ENCODE measurements at regions of chr1 and their contacts with region 1.

Region 1: DNA sequence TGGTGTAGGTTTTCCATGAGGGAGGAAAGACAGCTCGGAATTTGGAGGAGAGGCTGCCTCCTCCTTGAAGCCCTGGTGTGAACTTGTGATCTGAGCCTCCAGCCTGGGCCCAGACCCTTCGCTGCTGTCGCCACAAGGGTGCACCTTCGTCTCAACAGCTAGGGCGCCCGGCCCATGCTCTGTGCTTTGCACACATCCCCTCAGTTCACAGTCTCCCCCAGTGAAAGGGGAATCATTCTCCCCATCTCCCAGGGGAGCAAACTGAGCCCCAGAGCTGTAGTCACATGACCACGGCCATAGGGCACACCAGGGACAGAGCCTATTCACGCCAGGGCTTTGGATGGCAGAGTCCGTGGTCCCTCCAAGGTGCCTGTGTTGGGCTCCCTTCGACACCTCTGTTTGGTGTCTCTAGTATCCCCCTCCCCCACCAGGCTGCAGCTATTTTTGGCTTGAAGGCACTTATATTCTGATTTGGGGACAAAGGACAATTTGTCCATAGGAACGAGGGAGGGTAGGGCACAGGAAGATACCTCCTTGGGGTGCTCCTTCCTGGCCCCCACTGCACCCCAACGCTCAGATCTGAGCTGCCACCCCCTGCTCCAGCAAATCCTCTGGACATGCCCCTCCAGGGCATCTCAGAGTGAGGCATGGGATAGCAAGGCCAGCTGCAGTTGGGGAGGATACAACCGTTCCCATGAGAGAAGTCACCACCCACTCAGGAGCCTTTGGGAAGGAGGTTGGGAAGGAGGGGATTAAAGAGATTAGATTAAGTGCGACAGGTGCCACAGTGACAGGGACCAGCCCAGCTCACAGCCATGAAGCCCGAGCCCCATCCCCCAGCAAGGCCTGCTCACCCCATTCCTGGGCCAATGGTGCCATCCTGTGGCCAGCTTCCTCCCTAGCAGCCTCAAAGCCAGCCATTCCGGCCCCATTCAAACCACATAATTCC is 15.7 kb downstream of the MATN1 start:
- DNase-seq: peak; percentile 49
- H3K4me3 ChIP-seq: no peak overlapping the region
- H3K27ac ChIP-seq: no peak overlapping the region
- H3K4me1 ChIP-seq: peaks cover 11% of the 10 kb centered on the region
- H3K27me3 ChIP-seq: no peaks in the 10 kb centered on the region
- CTCF ChIP-seq: peak; percentile 93 to 98

Region 2: GRCh38 chr1:28886731-28887418 is 1820.8 kb before region 1 on chr1:
- CTCF ChIA-PET with region 1: no interaction called
- dilution Hi-C with region 1: no loop called
- in situ Hi-C with region 1: no loop called
- intact Hi-C with region 1: loop called (anchors 2 kb)
- DNase-seq: peak; percentile 86
- H3K4me3 ChIP-seq: peak overlapping the region; percentile 69 to 95 (median 78)
- H3K27ac ChIP-seq: peak overlapping the region; percentile 66
- H3K4me1 ChIP-seq: peaks cover 25% of the 10 kb centered on the region
- H3K27me3 ChIP-seq: no peaks in the 10 kb centered on the region
- CTCF ChIP-seq: no peak

Region 3: GRCh38 chr1:29698033-29698432 is 1009.7 kb before region 1 on chr1:
- CTCF ChIA-PET with region 1: no interaction called
- dilution Hi-C with region 1: no loop called
- in situ Hi-C with region 1: loop called in 1 of 2 experiments (anchors 25 kb)
- intact Hi-C with region 1: loop called (anchors 1 kb)
- DNase-seq: peak; percentile 51
- H3K4me3 ChIP-seq: no peak overlapping the region
- H3K27ac ChIP-seq: no peak overlapping the region
- H3K4me1 ChIP-seq: no peaks in the 10 kb centered on the region
- H3K27me3 ChIP-seq: no peaks in the 10 kb centered on the region
- CTCF ChIP-seq: peak; percentile 63 to 67

Region 4: DNA sequence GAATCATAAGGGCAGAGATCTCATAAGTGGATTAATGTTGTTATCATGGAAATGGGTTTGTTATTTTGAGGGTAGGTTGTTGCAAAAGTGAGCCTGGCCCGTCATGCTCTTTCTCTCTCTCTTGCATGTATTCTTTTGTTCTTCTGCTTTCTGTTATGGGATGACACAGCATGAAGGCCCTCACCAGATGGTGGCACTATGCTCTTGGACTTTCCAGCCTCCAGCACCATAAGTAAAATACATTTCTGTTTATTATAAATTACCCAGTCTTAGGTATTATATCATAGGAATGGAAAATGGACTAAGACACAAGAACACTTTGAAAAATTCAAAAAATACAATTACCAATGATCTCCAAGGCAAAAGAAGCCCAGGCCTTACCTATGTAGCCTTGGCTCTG is 795.3 kb before region 1 on chr1:
- CTCF ChIA-PET with region 1: interaction called, 3 read pairs
- dilution Hi-C with region 1: no loop called
- in situ Hi-C with region 1: no loop called
- intact Hi-C with region 1: loop called (anchors 1 kb)
- DNase-seq: peak; percentile 30
- H3K4me3 ChIP-seq: no peak overlapping the region
- H3K27ac ChIP-seq: no peak overlapping the region
- H3K4me1 ChIP-seq: no peaks in the 10 kb centered on the region
- H3K27me3 ChIP-seq: no peaks in the 10 kb centered on the region
- CTCF ChIP-seq: peak; percentile 41 to 67

Region 5: DNA sequence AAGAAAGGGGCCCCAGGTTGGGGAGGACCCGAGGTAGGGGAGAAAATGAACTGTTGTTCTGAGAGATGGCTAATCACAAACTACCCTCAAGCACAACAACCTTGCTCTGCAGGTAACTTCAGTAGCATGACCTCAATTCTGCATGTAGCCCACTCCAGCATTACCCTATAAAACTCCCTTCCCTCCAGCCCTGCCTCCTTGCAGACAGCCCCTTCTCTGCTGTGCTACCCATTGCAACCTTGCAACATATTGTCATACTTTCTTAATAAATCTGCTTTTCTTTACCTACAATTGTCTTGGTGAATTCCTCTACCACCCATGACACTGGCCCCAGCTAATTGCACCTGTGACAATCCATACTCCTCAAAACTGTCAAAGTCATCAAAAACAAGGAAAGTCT is 413.2 kb before region 1 on chr1:
- CTCF ChIA-PET with region 1: no interaction called
- dilution Hi-C with region 1: no loop called
- in situ Hi-C with region 1: no loop called
- intact Hi-C with region 1: loop called (anchors 10 kb)
- DNase-seq: no peak
- H3K4me3 ChIP-seq: no peak overlapping the region
- H3K27ac ChIP-seq: no peak overlapping the region
- H3K4me1 ChIP-seq: no peaks in the 10 kb centered on the region
- H3K27me3 ChIP-seq: no peaks in the 10 kb centered on the region
- CTCF ChIP-seq: no peak

Region 6: DNA sequence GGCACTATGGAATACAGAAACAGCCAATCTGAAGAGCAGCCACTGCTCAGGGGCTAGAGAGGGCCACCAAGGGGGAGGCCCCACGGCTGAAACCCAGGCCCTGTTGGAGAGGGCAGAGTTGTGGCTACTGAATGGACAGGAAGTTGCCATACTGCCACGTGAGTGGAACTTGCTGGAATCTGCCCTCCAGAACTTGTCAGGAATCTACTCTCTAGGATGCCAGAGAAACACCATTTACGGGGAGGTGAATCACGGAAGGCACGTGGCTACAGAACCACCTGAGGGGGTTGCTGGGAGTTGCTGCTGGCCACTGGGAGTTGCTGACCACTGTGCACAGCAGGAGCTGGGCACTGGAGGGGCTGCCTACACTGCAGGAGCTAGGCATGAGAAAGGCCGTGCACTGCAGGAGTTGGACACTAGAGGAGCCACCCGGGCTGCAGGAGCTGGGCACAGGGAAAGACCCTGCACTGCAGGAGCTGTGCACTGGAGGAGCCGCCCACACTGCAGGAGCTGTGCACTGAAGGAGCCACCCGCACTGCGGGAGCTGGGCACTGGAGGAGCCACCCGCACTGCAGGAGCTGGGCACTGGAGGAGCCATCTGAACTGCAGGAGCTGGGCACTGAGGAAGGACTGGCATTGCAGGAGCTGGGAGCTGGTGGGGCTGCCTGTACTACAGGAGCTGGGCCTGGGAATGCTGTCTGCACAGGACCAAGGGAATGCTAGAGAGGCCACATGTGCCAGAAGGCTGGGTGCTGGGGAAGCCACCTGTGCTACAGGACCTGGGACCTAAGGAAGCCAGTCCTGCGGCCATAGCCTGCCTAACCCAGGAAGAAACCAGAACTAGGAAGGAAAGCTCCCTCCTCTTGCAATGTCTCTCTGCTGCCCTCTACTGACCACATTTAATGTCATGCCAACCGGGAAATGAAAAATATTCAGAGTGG is 327.7 kb before region 1 on chr1:
- CTCF ChIA-PET with region 1: no interaction called
- dilution Hi-C with region 1: no loop called
- in situ Hi-C with region 1: no loop called
- intact Hi-C with region 1: loop called (anchors 2 kb)
- DNase-seq: peak; percentile 68
- H3K4me3 ChIP-seq: no peak overlapping the region
- H3K27ac ChIP-seq: no peak overlapping the region
- H3K4me1 ChIP-seq: peaks cover 23% of the 10 kb centered on the region
- H3K27me3 ChIP-seq: no peaks in the 10 kb centered on the region
- CTCF ChIP-seq: peak; percentile 89 to 93